Natural killer cell (primary cell): ENCODE measurements at regions of chr12 and their contacts with region 1.

Region 1: GRCh38 chr12:30847259-30847658 is 79.3 kb upstream of the TSPAN11 start:
- DNase-seq: peak in 1 of 2 donors; percentile 75
- ATAC-seq: no peak
- H3K4me3 ChIP-seq: no peak overlapping the region
- H3K4me3 Mint-ChIP-seq: no peak overlapping the region
- H3K27ac ChIP-seq: no peak overlapping the region
- H3K27ac Mint-ChIP-seq: no peak overlapping the region
- H3K4me1 ChIP-seq: peaks cover 7% of the 10 kb centered on the region
- H3K4me1 Mint-ChIP-seq: peaks cover 10% of the 10 kb centered on the region in 2 donors
- H3K27me3 ChIP-seq: no peaks in the 10 kb centered on the region
- H3K27me3 Mint-ChIP-seq: peaks cover 0 to 7% of the 10 kb centered on the region in 2 donors
- CTCF ChIP-seq: peak; percentile 67

Region 2: GRCh38 chr12:29519585-29520182 is 1327.6 kb before region 1 on chr12:
- intact Hi-C with region 1: loop called (anchors 1 kb)
- DNase-seq: peak in 1 of 2 donors; percentile 63
- ATAC-seq: no peak
- H3K4me3 ChIP-seq: no peak overlapping the region
- H3K4me3 Mint-ChIP-seq: no peak overlapping the region
- H3K27ac ChIP-seq: no peak overlapping the region
- H3K27ac Mint-ChIP-seq: no peak overlapping the region
- H3K4me1 ChIP-seq: no peaks in the 10 kb centered on the region
- H3K4me1 Mint-ChIP-seq: no peaks in the 10 kb centered on the region
- H3K27me3 ChIP-seq: no peaks in the 10 kb centered on the region
- H3K27me3 Mint-ChIP-seq: peaks cover 4 to 25% of the 10 kb centered on the region in 2 donors
- CTCF ChIP-seq: peak; percentile 46

Region 3: GRCh38 chr12:31238764-31239387 is 391.6 kb after region 1 on chr12:
- intact Hi-C with region 1: loop called (anchors 10 kb)
- DNase-seq: peak; percentile 33 to 53
- ATAC-seq: peak; percentile 60 to 86 (median 73)
- H3K4me3 ChIP-seq: no peak overlapping the region
- H3K4me3 Mint-ChIP-seq: peak overlapping the region; percentile 37
- H3K27ac ChIP-seq: no peak overlapping the region
- H3K27ac Mint-ChIP-seq: no peak overlapping the region
- H3K4me1 ChIP-seq: no peaks in the 10 kb centered on the region
- H3K4me1 Mint-ChIP-seq: peaks cover 0 to 5% of the 10 kb centered on the region in 2 donors
- H3K27me3 ChIP-seq: no peaks in the 10 kb centered on the region
- H3K27me3 Mint-ChIP-seq: peaks cover 16 to 17% of the 10 kb centered on the region in 2 donors
- CTCF ChIP-seq: peak; percentile 63

Region 4: GRCh38 chr12:31267966-31268365 is 420.7 kb after region 1 on chr12:
- intact Hi-C with region 1: loop called (anchors 2 kb)
- DNase-seq: no peak
- ATAC-seq: no peak
- H3K4me3 ChIP-seq: no peak overlapping the region
- H3K4me3 Mint-ChIP-seq: no peak overlapping the region
- H3K27ac ChIP-seq: no peak overlapping the region
- H3K27ac Mint-ChIP-seq: no peak overlapping the region
- H3K4me1 ChIP-seq: no peaks in the 10 kb centered on the region
- H3K4me1 Mint-ChIP-seq: no peaks in the 10 kb centered on the region
- H3K27me3 ChIP-seq: no peaks in the 10 kb centered on the region
- H3K27me3 Mint-ChIP-seq: no peaks in the 10 kb centered on the region
- CTCF ChIP-seq: no peak

Region 5: DNA sequence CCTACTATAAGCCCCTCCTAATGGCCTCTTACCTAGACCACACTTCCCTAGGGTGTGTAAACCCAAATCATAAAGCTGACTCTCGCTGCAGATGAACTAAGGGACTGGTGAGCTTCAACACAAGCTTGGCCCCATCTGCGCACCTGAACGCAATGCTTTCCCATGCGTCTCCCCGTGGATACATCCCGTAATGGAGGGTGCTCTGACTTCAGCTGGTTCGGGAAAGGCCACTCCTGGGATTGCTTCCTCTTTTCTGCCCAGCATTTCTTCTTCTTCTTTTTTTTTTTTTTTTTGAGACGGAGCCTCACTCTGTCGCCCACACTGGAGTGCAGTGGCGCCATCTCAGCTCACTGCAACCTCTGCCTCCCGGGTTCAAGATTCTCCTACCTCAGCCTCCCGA is 784.5 kb after region 1 on chr12:
- intact Hi-C with region 1: loop called (anchors 2 kb)
- DNase-seq: no peak
- ATAC-seq: no peak
- H3K4me3 ChIP-seq: no peak overlapping the region
- H3K4me3 Mint-ChIP-seq: no peak overlapping the region
- H3K27ac ChIP-seq: no peak overlapping the region
- H3K27ac Mint-ChIP-seq: no peak overlapping the region
- H3K4me1 ChIP-seq: no peaks in the 10 kb centered on the region
- H3K4me1 Mint-ChIP-seq: peaks cover 6 to 8% of the 10 kb centered on the region in 2 donors
- H3K27me3 ChIP-seq: no peaks in the 10 kb centered on the region
- H3K27me3 Mint-ChIP-seq: peaks cover 0 to 3% of the 10 kb centered on the region in 2 donors
- CTCF ChIP-seq: no peak